MCF 10A (cell line): ENCODE measurements at regions of chr15 and their contacts with region 1.

Region 1: DNA sequence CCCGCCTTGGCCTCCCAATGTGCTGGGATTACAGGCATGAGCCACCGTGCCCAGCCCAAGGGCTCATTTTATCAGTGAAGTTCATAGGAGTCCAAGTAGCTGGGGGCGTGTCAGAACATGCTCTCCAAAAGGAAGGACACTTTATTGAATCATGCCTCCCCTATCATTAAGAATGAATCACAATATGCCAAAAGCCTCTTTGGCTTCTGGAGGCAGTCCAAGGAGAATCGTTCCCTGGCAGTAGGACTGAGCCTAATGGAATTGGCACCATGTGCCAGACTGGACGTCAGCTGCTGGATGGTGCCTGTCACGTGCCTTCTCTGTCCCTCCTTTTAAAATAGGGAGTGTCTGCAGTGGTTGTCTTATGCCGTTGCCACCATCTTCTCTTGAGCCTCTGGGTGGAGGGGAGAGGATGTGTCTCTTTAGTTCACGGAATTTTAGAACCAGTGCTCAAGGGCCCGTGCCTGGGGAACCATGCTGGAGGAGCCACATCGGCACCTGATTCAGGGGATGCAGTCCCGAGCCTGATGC is 234.7 kb upstream of the LYSMD4 start:
- DNase-seq: peak; percentile 96
- H3K4me3 Mint-ChIP-seq: peak overlapping the region; percentile 3
- H3K27ac Mint-ChIP-seq: peak overlapping the region; percentile 41
- H3K4me1 Mint-ChIP-seq: peaks cover 22% of the 10 kb centered on the region
- H3K27me3 Mint-ChIP-seq: no peaks in the 10 kb centered on the region
- CTCF ChIP-seq: no peak

Region 2: DNA sequence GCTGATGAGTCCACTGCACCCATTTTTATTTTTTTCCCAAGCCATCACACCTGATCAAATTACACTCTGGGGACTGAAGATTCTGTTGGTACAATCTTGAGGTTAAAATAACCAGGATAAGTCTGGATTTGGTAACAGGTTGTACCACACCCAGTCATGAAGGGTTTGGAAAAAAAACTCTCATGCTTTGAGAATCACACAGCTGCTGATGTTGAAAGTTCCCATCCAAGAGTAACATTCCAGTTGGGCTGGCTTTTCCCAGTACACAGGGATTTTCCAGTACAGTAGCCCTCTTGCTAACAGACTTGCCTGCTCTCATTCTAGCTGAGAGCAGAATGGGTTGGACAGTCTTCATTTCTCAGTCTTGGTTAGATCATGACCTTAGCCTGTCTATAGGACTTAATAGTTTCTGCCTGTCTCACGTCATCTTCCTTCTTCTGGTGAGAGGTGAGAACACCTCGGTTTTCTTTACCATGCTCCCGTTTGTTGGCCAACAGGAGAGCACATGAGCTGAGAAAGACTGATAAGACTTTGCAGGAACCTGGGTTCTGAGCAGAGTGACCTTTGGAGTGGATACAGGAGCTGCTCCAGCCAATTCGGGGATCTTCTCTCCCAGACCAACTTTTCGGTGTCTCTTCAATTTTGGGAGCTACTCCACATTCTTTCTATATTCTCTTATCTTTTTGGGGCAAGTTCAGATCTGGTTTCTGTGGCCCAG is 65.4 kb after region 1 on chr15:
- CTCF ChIA-PET with region 1: no interaction called
- POLR2A ChIA-PET with region 1: no interaction called
- intact Hi-C with region 1: loop called (anchors 5 kb)
- DNase-seq: peak; percentile 54
- H3K4me3 Mint-ChIP-seq: no peak overlapping the region
- H3K27ac Mint-ChIP-seq: no peak overlapping the region
- H3K4me1 Mint-ChIP-seq: peaks cover 28% of the 10 kb centered on the region
- H3K27me3 Mint-ChIP-seq: no peaks in the 10 kb centered on the region
- CTCF ChIP-seq: no peak

Region 3: DNA sequence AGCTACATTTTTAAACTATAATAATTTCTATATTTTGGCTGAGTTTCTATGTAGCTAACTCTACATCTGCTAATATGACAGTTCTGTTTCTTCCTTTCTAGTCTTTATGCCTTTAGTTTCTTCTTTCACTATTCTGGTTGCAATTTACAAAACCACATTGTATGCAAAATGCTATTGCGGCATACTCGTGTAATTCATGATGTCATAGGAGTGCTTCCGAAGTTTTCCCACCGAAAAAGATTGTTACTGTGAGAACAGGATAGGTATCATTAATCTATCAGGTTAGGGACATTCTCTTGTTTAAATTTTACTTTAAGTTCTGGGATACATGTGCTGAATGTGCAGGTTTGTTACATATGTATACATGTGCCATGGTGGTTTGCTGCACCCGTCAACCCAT is 97.5 kb after region 1 on chr15:
- CTCF ChIA-PET with region 1: no interaction called
- POLR2A ChIA-PET with region 1: no interaction called
- intact Hi-C with region 1: no loop called
- DNase-seq: no peak
- H3K4me3 Mint-ChIP-seq: no peak overlapping the region
- H3K27ac Mint-ChIP-seq: no peak overlapping the region
- H3K4me1 Mint-ChIP-seq: peaks cover 7% of the 10 kb centered on the region
- H3K27me3 Mint-ChIP-seq: no peaks in the 10 kb centered on the region
- CTCF ChIP-seq: no peak

Region 4: GRCh38 chr15:100111103-100112060 is 143.5 kb after region 1 on chr15:
- CTCF ChIA-PET with region 1: interaction called, 3 read pairs
- POLR2A ChIA-PET with region 1: interaction called, 3 read pairs
- intact Hi-C with region 1: loop called (anchors 2 kb)
- DNase-seq: peak; percentile 89
- H3K4me3 Mint-ChIP-seq: peak overlapping the region; percentile 26
- H3K27ac Mint-ChIP-seq: peak overlapping the region; percentile 84
- H3K4me1 Mint-ChIP-seq: peaks cover 31% of the 10 kb centered on the region
- H3K27me3 Mint-ChIP-seq: no peaks in the 10 kb centered on the region
- CTCF ChIP-seq: no peak